Endothelial cell of umbilical vein (primary cell): ENCODE measurements at regions of chr15 and their contacts with region 1.

Region 1: DNA sequence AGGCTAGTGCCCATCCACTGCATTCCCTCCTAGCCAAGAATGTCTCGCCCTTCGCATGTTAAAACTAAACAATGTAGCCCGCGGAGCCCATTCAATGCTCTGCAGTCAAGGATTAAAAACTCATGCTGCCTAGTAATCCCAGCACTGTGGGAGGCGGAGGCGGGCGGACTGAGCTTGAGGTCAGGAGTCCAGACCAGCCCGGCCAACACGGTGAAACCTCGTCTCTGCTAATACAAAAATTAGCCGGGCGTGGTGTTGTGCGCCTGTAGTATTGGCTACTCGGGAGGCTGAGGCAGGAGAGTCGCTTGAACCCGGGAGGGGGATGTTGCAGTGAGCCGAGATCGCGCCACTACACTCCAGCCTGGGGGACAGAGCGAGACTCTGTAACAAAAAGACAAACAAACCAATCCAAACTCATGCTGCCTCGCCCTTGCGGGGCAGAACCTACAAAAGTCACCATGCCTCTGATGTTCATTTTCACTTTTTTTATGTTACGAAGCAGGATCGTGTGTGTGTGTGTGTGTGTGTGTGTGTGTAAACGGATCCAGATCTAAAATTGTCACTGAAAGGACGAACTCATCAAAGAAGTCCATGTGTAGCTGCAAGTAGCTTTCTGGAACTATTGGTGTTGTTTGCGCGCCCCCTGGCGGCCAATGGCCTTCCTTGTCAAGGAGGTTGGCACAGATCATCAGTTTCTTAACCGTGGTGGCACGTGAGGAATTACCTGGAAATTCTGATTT is 54.8 kb upstream of the SPESP1 start:
- DNase-seq: peak; percentile 91
- H3K4me3 ChIP-seq: peak overlapping the region in 2 of 3 experiments; percentile 6 to 24
- H3K27ac ChIP-seq: no peak overlapping the region
- H3K4me1 ChIP-seq: no peaks in the 10 kb centered on the region
- H3K27me3 ChIP-seq: peaks cover 7 to 9% of the 10 kb centered on the region in 2 experiments
- CTCF ChIP-seq: peak; percentile 83 to 84
- POLR2A ChIP-seq: no peak

Region 2: DNA sequence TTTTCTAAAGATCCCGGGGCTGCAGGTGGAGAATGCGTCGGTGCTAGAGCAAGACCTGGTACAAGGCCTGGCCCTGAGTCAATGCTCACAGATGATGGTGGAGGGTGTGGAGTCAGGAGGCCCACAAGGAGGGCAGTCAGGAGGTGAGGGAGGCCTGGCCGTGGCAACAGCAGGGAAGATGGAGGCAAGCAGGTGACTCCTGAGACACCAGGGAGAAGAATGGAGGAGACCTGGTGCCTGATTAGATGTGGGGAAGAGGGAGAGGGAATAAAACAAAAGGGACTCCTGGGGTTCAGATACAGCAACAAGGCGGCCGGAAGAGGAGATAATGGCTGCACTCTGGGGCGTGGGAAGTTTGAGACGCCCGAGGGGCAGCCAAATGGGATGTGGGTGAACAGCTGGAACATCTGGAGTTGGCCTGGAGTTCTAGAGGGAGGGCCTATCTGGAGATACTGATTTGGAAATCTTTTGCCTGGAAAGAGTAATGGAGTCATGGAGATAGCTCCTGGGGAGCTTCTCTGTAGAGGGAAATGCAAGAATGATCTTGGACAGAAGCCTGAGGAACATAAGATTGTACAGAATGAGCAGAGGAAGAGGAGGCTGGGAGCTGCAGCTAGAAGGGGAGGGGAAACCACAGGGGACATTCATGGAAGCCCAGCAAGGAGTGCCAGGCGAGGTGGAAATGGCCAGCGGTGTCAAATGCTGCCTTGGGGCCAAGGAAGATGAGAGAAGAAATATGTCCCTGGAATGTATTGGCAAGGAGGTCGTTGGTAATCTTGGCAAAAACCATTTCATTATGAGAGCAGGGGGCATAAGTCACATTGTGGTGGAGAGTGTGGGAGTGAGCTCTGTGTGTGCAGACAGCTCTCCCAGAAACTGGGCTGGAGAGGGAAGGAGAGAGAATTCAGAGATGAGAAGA is 364.2 kb before region 1 on chr15:
- CTCF ChIA-PET with region 1: no interaction called
- POLR2A ChIA-PET with region 1: no interaction called
- dilution Hi-C with region 1: no loop called
- intact Hi-C with region 1: no loop called
- DNase-seq: no peak
- H3K4me3 ChIP-seq: no peak overlapping the region
- H3K27ac ChIP-seq: no peak overlapping the region
- H3K4me1 ChIP-seq: no peaks in the 10 kb centered on the region
- H3K27me3 ChIP-seq: peaks cover 18 to 21% of the 10 kb centered on the region in 2 experiments
- CTCF ChIP-seq: no peak
- POLR2A ChIP-seq: no peak

Region 3: DNA sequence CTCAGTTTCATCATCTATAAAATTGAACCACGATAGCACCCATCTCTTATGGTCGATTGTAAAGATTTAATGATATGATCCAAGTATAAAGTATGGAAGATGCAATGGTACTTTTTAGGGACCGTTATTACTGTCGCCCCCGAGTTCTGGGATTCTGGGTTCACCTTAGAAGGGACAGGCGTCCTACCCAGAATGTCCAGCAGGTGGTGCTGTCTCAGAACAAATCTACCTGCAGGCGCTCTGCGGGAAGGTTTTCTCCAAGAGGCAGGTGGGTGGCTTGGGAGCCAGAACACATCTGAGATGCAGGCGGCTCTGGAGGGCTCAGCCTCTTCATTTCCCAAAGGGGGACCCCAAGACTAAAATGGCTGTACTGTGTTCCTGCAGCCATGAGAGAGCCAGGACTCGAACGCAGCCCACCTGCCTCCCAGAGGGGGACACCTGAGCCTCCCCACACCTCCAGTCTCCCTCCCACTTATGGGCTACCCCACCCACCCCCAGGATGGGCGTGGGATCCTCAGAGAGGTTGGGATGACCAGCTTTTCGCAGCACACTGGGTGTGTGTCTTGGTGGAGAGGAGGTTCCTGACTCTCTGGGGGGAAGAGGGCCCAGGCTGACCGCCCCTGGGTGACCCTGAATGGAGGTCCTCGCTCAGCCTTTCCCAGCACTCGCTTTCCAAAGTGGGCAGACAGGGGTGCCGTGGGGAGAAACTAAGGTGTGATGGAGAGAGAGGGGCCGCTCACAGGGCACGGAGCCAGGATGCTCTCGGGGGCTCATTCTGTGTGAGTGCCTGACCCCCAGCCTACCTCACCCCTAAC is 324.9 kb before region 1 on chr15:
- CTCF ChIA-PET with region 1: interaction called, 88 read pairs
- POLR2A ChIA-PET with region 1: interaction called, 4 read pairs
- dilution Hi-C with region 1: no loop called
- intact Hi-C with region 1: loop called (anchors 1 kb)
- DNase-seq: peak; percentile 41
- H3K4me3 ChIP-seq: no peak overlapping the region
- H3K27ac ChIP-seq: no peak overlapping the region
- H3K4me1 ChIP-seq: peaks cover 8% of the 10 kb centered on the region
- H3K27me3 ChIP-seq: peaks cover 5% of the 10 kb centered on the region in 2 experiments
- CTCF ChIP-seq: peak; percentile 80 to 87
- POLR2A ChIP-seq: no peak

Region 4: GRCh38 chr15:68730471-68730919 is 145.1 kb before region 1 on chr15:
- CTCF ChIA-PET with region 1: interaction called, 79 read pairs
- POLR2A ChIA-PET with region 1: no interaction called
- dilution Hi-C with region 1: no loop called
- intact Hi-C with region 1: loop called (anchors 1 kb)
- DNase-seq: peak; percentile 76
- H3K4me3 ChIP-seq: no peak overlapping the region
- H3K27ac ChIP-seq: no peak overlapping the region
- H3K4me1 ChIP-seq: peaks cover 2% of the 10 kb centered on the region
- H3K27me3 ChIP-seq: peaks cover 9 to 11% of the 10 kb centered on the region in 2 experiments
- CTCF ChIP-seq: peak; percentile 35 to 64
- POLR2A ChIP-seq: no peak

Region 5: GRCh38 chr15:68795298-68795848 is 80.2 kb before region 1 on chr15:
- CTCF ChIA-PET with region 1: interaction called, 17 read pairs
- POLR2A ChIA-PET with region 1: no interaction called
- dilution Hi-C with region 1: no loop called
- intact Hi-C with region 1: no loop called
- DNase-seq: peak; percentile 93
- H3K4me3 ChIP-seq: no peak overlapping the region
- H3K27ac ChIP-seq: peak overlapping the region; percentile 58
- H3K4me1 ChIP-seq: peaks cover 27% of the 10 kb centered on the region
- H3K27me3 ChIP-seq: no peaks in the 10 kb centered on the region
- CTCF ChIP-seq: no peak
- POLR2A ChIP-seq: no peak

Region 6: DNA sequence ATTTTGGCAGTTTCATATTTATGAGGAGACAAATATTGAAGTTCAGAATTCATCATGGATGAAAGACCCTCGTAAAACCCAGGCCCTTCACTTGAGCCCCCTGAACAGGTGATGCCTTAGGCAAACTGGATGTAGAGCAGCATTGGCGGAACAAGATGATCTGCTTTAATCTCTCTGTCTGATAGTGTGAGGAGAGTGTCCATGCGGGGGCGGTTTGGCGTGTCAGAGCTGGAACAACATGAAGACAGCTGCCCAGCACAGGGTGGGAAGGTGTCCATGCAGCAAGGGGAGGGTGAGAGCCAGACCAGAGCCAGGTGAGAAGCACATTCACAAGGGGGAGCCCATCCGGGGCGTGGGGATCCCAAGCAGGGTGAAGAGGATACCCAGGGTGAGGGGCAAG is 23.1 kb before region 1 on chr15:
- CTCF ChIA-PET with region 1: interaction called, 12 read pairs
- POLR2A ChIA-PET with region 1: no interaction called
- dilution Hi-C with region 1: no loop called
- intact Hi-C with region 1: no loop called
- DNase-seq: no peak
- H3K4me3 ChIP-seq: no peak overlapping the region
- H3K27ac ChIP-seq: no peak overlapping the region
- H3K4me1 ChIP-seq: no peaks in the 10 kb centered on the region
- H3K27me3 ChIP-seq: peaks cover 12 to 17% of the 10 kb centered on the region in 2 experiments
- CTCF ChIP-seq: no peak
- POLR2A ChIP-seq: no peak

Region 7: DNA sequence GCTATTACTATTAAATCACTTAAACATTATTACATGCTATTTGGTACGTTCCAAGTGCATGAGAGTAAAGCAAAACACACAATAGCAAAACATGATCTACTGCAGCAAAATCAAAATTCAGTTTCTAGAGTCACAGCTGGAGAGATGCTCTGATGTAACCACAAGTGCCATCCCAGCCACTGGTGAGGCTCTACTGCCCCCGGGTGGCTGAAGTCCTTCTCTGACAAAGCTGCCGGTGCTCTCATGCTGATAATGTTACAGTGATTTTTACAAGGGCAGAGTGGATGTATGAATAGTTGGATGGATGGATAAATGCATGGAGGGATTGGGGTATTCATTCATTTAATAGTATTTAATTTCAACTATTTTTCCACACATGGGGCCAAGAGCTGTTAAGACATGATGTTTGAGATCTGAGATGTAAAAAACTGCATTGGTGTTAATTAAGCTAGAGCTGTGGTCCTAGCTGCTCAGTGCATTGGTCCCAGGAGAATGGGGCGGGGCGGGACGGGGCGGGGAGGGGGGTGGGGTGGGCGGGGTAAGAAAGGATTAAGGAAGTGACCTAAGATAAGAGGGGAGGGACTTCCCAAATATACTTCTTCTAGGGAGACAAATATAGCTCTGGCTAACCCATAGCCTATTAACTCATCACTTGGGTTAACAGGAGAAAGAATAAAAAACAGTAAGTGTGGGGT is 49.5 kb after region 1 on chr15:
- CTCF ChIA-PET with region 1: interaction called, 27 read pairs
- POLR2A ChIA-PET with region 1: no interaction called
- dilution Hi-C with region 1: no loop called
- intact Hi-C with region 1: no loop called
- DNase-seq: peak; percentile 75
- H3K4me3 ChIP-seq: no peak overlapping the region
- H3K27ac ChIP-seq: no peak overlapping the region
- H3K4me1 ChIP-seq: no peaks in the 10 kb centered on the region
- H3K27me3 ChIP-seq: peaks cover 5 to 37% of the 10 kb centered on the region in 2 experiments
- CTCF ChIP-seq: peak; percentile 72 to 78
- POLR2A ChIP-seq: no peak